HepG2 (cell line): ENCODE measurements at regions of chr4 and their contacts with region 1.

Region 1: GRCh38 chr4:70183168-70183939 is 12.2 kb upstream of the ODAM start:
- DNase-seq: peak; percentile 75
- ATAC-seq: peak; percentile 20; the same call in 2 of the 3 replicates
- H3K4me3 ChIP-seq: peak overlapping the region in 1 of 3 experiments; percentile 13; a peak in 1 of 6 replicates
- H3K27ac ChIP-seq: peak overlapping the region; percentile 90
- H3K4me1 ChIP-seq: peaks cover 73% of the 10 kb centered on the region
- H3K27me3 ChIP-seq: no peaks in the 10 kb centered on the region
- CTCF ChIP-seq: peak; percentile 64
- EP300 ChIP-seq: no peak
- POLR2A ChIP-seq: no peak
- RAD21 ChIP-seq: peak; percentile 69

Region 2: DNA sequence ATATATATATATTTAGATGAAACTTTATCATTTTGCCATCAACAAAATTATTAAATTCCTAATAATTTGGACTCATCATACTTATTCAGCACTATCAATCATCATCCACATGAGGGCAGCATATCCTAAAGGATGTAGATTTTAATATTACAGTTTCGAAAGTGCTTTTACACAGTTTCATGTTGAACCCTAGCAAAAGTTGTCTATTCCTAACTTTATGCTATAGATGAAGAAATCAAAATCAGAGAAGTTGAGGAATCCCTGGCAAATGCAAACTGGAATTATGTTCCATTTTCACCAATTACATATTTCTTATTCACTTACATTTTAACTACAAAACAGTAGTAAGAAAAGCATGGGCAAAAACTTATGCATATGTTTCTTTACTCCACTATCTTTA is 493.8 kb before region 1 on chr4:
- CTCF ChIA-PET with region 1: no interaction called
- POLR2A ChIA-PET with region 1: no interaction called
- in situ Hi-C with region 1: no loop called
- intact Hi-C with region 1: loop called (anchors 1 kb)
- DNase-seq: peak; percentile 66
- ATAC-seq: no peak
- H3K4me3 ChIP-seq: no peak overlapping the region
- H3K27ac ChIP-seq: peak overlapping the region; percentile 2
- H3K4me1 ChIP-seq: peaks cover 19% of the 10 kb centered on the region
- H3K27me3 ChIP-seq: no peaks in the 10 kb centered on the region
- CTCF ChIP-seq: peak; percentile 71
- EP300 ChIP-seq: no peak
- POLR2A ChIP-seq: no peak
- RAD21 ChIP-seq: peak; percentile 82

Region 3: DNA sequence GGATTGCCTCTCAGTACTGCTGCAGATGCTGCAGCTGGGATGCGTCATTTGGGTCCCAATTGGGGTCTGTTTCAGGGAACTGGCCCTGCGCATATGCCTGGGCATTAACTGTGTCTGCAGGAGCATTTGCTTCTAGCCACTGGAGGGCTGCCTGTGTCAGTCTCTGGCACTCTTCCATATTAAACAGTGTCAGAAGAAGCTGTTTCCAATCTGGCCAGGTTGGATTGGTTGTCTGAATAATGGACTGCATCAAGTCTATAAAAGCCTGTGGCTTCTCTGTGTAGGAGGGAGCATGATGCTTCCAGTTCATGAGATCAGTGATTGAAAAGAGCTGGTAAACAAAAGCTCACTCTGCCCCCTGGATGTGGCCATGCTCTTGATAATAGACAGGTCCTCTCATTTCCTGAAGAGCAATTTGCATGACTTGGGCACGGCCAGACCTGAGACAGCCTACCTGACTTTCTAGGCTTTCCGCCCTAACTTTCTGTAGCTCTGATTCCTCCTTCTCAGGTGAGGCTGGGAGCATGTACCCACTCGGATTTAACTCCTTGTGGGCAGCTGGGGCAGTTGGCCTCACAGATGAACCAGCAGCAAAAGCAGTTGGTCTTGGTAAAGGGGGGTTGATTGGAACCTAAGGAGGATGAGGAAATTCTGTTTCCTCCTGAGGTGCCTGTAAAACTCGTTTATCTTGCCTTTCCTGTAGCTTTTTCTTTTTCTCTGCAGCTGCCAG is 352.6 kb before region 1 on chr4:
- CTCF ChIA-PET with region 1: no interaction called
- POLR2A ChIA-PET with region 1: interaction called, 7 read pairs
- in situ Hi-C with region 1: loop called (anchors 5 kb)
- intact Hi-C with region 1: loop called (anchors 2 kb)
- DNase-seq: peak; percentile 81
- ATAC-seq: peak; percentile 54
- H3K4me3 ChIP-seq: no peak overlapping the region
- H3K27ac ChIP-seq: peak overlapping the region; percentile 93
- H3K4me1 ChIP-seq: peaks cover 82% of the 10 kb centered on the region
- H3K27me3 ChIP-seq: no peaks in the 10 kb centered on the region
- CTCF ChIP-seq: peak; percentile 53
- EP300 ChIP-seq: 0 out of 4 replicates have a peak, but pooled peaks of 1 of the 2 experiments have one; percentile 8
- POLR2A ChIP-seq: no peak
- RAD21 ChIP-seq: no peak

Region 4: GRCh38 chr4:69896530-69897116 is 286.7 kb before region 1 on chr4:
- CTCF ChIA-PET with region 1: interaction called, 3 read pairs
- POLR2A ChIA-PET with region 1: no interaction called
- in situ Hi-C with region 1: no loop called
- intact Hi-C with region 1: loop called (anchors 5 kb)
- DNase-seq: peak; percentile 12
- ATAC-seq: no peak
- H3K4me3 ChIP-seq: no peak overlapping the region
- H3K27ac ChIP-seq: no peak overlapping the region
- H3K4me1 ChIP-seq: peaks cover 7% of the 10 kb centered on the region; the same call in 1 of the 2 replicates
- H3K27me3 ChIP-seq: no peaks in the 10 kb centered on the region
- CTCF ChIP-seq: peak; percentile 52
- EP300 ChIP-seq: no peak
- POLR2A ChIP-seq: no peak
- RAD21 ChIP-seq: no peak

Region 5: GRCh38 chr4:70239884-70240591 is 56.7 kb after region 1 on chr4:
- CTCF ChIA-PET with region 1: no interaction called
- POLR2A ChIA-PET with region 1: no interaction called
- in situ Hi-C with region 1: no loop called
- intact Hi-C with region 1: loop called (anchors 2 kb)
- DNase-seq: peak; percentile 10
- ATAC-seq: peak; percentile 50; the same call in 2 of the 3 replicates
- H3K4me3 ChIP-seq: no peak overlapping the region
- H3K27ac ChIP-seq: no peak overlapping the region
- H3K4me1 ChIP-seq: peaks cover 32% of the 10 kb centered on the region
- H3K27me3 ChIP-seq: no peaks in the 10 kb centered on the region
- CTCF ChIP-seq: no peak
- EP300 ChIP-seq: no peak
- POLR2A ChIP-seq: no peak
- RAD21 ChIP-seq: no peak

Region 6: GRCh38 chr4:70315928-70316327 is 132.6 kb after region 1 on chr4:
- CTCF ChIA-PET with region 1: no interaction called
- POLR2A ChIA-PET with region 1: no interaction called
- in situ Hi-C with region 1: no loop called
- intact Hi-C with region 1: no loop called
- DNase-seq: no peak
- ATAC-seq: no peak
- H3K4me3 ChIP-seq: no peak overlapping the region
- H3K27ac ChIP-seq: no peak overlapping the region
- H3K4me1 ChIP-seq: no peaks in the 10 kb centered on the region
- H3K27me3 ChIP-seq: 0 out of 5 replicates have a peak, but pooled peaks cover 0 to 6% of the 10 kb centered on the region in 2 experiments
- CTCF ChIP-seq: peak; percentile 18; the same call in 1 of the 2 replicates
- EP300 ChIP-seq: no peak
- POLR2A ChIP-seq: no peak
- RAD21 ChIP-seq: no peak

Region 7: DNA sequence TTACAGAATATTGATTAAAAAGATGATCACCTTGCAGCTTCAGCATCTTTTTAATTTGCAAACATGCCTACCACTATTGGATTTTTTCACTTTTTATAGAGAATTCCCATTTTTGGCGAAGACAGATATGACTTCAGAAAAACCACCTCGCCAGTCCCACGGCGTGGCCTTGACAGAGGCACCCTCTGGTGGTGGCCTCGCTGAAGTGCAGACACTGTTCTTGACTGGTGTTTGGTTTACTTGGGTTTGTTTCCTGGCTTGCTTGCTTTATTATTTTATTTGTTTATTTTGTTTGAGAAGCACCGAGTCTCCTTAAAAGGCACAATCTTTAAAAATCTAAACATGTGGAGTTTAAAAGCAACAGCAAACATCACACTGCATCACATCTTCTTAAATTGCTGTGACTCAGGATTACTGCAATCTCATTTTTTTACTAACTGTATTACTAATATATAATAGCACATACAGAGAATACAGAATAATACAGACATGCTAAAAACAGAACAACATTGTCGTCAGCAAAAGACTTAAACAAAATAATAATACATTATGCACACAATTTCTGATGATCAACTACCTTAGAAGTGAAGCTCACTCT is 321.9 kb after region 1 on chr4:
- CTCF ChIA-PET with region 1: no interaction called
- POLR2A ChIA-PET with region 1: no interaction called
- in situ Hi-C with region 1: no loop called
- intact Hi-C with region 1: loop called (anchors 2 kb)
- DNase-seq: peak; percentile 38
- ATAC-seq: peak; percentile 85
- H3K4me3 ChIP-seq: no peak overlapping the region
- H3K27ac ChIP-seq: no peak overlapping the region
- H3K4me1 ChIP-seq: no peaks in the 10 kb centered on the region
- H3K27me3 ChIP-seq: no peaks in the 10 kb centered on the region
- CTCF ChIP-seq: peak; percentile 86
- EP300 ChIP-seq: no peak
- POLR2A ChIP-seq: no peak
- RAD21 ChIP-seq: peak; percentile 84

Region 8: DNA sequence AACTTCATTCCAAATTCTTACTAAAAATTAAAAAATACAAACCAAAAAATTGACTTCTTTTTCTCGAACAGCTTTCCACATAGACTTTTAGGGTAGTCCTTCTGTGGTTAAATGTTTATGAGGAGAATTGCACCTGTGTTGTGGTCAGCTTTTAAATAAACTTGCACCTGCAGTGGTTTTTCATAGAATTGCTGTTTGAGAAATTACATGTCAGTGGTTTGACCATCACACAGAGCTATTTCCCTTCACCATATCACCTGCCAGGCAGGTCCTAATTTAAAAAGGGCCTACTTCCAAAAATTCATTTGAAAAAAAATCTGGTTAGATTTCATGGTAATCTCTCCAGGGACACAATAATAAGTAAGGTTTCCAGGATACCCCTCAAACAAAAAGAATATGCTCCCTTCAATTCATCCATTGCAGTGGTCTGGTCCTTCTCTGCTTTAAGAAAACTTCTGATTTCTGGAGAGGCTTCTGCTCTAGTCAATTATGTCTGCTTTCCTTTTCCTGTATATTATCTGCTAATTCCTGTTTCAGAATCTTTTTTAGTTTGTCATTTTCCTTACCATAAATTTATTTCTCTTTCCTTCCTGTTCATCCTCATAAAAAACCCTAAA is 495.1 kb after region 1 on chr4:
- CTCF ChIA-PET with region 1: no interaction called
- POLR2A ChIA-PET with region 1: no interaction called
- in situ Hi-C with region 1: no loop called
- intact Hi-C with region 1: no loop called
- DNase-seq: no peak
- ATAC-seq: no peak
- H3K4me3 ChIP-seq: no peak overlapping the region
- H3K27ac ChIP-seq: no peak overlapping the region
- H3K4me1 ChIP-seq: no peaks in the 10 kb centered on the region
- H3K27me3 ChIP-seq: no peaks in the 10 kb centered on the region; a peak in 1 of 5 replicates
- CTCF ChIP-seq: no peak
- EP300 ChIP-seq: no peak
- POLR2A ChIP-seq: no peak
- RAD21 ChIP-seq: no peak